Ascending aorta (tissue), 2 donors: ENCODE measurements at regions of chr15 and their contacts with region 1.

Region 1: DNA sequence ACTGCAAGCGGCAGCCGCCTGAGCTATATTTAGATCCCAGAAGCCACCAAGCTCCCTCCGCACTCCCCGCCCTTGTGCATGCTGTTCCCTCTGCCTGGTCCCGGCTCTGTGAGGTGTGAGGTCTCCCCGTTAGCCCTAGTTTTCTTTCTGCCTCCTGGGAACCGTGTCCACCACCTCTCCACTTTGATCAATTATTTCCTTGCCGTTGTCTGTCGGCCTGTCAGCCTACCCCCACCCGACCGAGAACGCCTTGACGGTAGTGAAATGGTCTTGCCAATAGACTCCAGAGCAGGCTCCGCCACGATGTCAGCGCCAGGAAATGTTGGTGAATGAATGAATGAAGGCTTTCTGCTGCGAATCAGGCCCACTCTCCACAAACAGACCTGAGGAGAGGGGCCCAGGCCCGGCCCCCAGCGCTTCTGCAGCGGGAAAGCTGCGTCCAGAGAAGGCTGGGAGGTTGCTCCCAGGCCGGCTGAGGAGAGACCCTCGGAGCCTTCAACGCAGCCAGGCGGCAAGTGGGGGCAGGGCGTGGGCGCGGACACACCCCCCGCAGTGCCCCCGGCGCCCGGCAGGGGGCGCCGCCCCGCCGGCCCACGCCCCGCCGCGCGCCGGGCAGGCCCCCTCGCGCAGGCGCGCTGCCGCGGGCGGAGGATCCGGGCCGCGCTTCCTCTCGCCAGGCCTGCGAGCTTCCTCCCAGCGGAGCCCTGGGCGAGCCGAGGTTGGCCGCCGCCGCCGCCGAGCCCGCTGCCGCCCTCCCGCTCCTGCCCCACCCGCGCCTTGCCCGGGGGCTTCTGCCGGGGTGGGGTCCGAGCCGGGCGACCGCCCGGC is at the start of gene CSK:
- DNase-seq: peak in 1 of 2 donors; percentile 80
- H3K4me3 ChIP-seq: peak within 1 kb of the TSS; percentile 89 to 95
- H3K27ac ChIP-seq: peak within 1 kb of the TSS; percentile 76 to 78
- H3K4me1 ChIP-seq: peaks cover 24 to 39% of the 10 kb centered on the region in 2 donors
- H3K27me3 ChIP-seq: no peaks in the 10 kb centered on the region
- CTCF ChIP-seq: peak; percentile 37 to 88 (median 52)
- total RNA-seq, gene CSK: 31.0 TPM

Region 2: GRCh38 chr15:74768771-74769342 is 12.8 kb before region 1 on chr15:
- intact Hi-C with region 1: no loop called
- DNase-seq: no peak
- H3K4me3 ChIP-seq: no peak overlapping the region
- H3K27ac ChIP-seq: no peak overlapping the region
- H3K4me1 ChIP-seq: no peaks in the 10 kb centered on the region
- H3K27me3 ChIP-seq: no peaks in the 10 kb centered on the region
- CTCF ChIP-seq: peak; percentile 83 to 93 (median 88)

Region 3: GRCh38 chr15:74799856-74800547 is 18.4 kb after region 1 on chr15:
- intact Hi-C with region 1: loop called (anchors 1 kb)
- DNase-seq: peak; percentile 55 to 89
- H3K4me3 ChIP-seq: no peak overlapping the region
- H3K27ac ChIP-seq: no peak overlapping the region
- H3K4me1 ChIP-seq: no peaks in the 10 kb centered on the region
- H3K27me3 ChIP-seq: no peaks in the 10 kb centered on the region
- CTCF ChIP-seq: peak; percentile 93 to 97 (median 95)

Region 4: DNA sequence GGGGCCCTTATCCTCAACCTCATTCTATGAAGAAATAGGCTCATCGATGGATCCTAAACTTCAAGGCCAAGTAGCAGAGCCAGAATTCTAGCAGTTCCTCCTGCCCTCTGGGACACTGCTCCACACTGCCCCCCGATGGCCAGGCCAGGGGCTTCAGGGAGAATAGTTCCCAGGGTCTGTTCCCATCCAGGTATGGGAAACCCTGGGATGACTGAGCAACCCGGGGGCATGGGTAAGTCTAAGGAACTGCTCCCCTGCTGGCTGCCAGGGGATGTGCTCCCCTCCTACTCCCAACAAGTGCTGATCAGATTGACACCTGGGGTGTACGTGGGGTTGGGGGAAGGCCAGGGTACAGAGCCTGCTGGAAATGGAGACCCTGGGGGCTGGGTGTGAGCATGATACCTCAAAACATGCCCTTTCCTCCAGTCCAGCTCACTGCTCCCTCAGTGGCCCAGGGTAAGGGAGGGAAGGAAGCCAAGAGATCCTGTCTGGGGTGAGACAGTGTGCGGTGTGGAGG is 53.7 kb after region 1 on chr15:
- intact Hi-C with region 1: loop called (anchors 1 kb)
- DNase-seq: no peak
- H3K4me3 ChIP-seq: no peak overlapping the region
- H3K27ac ChIP-seq: no peak overlapping the region
- H3K4me1 ChIP-seq: no peaks in the 10 kb centered on the region
- H3K27me3 ChIP-seq: no peaks in the 10 kb centered on the region
- CTCF ChIP-seq: peak; percentile 53 to 60 (median 56)

Region 5: DNA sequence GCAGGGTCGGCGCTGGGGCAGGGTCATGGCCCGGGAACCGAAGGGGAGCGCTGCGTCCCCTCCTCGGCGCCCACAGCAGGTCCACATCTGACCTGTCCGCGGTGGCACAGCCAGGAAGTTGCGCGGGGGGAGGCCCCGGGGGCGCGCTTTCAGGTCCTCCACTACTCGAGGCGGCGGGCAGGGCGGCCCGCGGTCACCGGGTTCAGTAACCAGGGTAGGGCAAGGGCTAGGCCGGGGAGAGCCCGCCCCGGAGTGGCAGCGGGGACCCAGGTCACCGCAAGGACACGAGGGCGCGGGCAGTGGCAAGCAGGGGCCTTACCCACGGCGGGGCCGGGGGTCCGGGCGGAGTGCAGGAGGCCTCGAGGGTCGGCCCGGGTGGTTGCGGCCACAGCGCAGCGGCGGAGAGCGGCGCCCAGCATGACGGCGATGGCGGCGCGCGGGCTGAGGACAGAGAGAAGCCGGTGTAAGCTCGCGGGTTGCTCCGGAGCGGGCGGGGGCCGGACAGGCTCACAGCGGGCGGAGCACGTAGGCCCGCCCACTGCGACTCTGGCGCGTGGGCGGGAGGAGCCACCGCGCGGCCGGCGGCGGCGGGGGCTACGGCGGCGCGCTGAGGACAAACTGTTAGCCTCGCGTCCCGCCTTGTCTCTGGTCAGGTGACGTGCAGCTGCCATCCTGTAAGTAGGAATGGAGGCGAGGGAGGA is 156.1 kb after region 1 on chr15 and contains the start of gene COX5A:
- intact Hi-C with region 1: loop called (anchors 5 kb)
- DNase-seq: peak; percentile 87 to 97
- H3K4me3 ChIP-seq: peak within 1 kb of the TSS; percentile 80 to 83
- H3K27ac ChIP-seq: peak within 1 kb of the TSS; percentile 87 to 88
- H3K4me1 ChIP-seq: peaks cover 8 to 24% of the 10 kb centered on the region in 2 donors
- H3K27me3 ChIP-seq: no peaks in the 10 kb centered on the region
- CTCF ChIP-seq: peak in 1 of 3 experiments; percentile 43
- total RNA-seq, gene COX5A: 83.5 TPM